ENCODE measurements at regions of chr11 and their contacts with region 1.

Region 1: DNA sequence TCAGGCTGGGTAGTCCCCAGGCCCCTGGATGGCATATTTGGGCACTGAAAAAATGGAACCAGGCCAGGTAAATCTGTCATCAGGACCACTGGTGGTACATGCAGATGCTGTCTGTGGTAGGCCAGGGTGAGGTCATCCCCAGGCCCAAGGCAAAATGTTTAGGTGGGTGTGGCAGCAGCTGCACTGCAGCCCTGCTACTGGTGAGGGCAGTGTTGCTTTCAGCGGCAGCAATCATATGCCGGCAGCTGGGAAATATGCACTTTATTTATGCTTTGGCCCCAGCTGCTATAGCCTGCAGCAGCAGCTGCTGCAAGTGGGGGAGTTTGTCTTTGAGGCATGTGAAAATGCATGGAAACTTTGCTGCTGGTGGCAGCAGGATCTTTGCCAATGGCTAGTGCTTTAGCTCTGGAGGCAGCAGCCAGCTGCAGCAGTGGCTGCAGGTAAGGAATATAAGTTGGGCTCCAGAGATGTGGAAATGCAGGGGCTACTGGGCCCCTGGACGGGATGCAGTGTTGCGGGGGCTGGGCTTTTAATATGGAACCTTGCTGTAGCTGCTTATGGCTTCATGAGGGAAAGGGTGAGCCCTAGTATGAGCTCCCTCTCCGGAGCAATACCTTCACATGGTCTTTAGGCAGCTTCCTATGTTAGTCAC is 365.7 kb upstream of the CADM1 start:
- DNase-seq: peak; percentile 51
- ATAC-seq: peak; percentile 87
- H3K4me3 ChIP-seq: no peak overlapping the region
- H3K27ac ChIP-seq: no peak overlapping the region
- H3K4me1 ChIP-seq: peaks cover 49% of the 10 kb centered on the region
- H3K27me3 ChIP-seq: no peaks in the 10 kb centered on the region
- CTCF ChIP-seq: peak; percentile 80 to 90 (median 85)
- EP300 ChIP-seq: peak in 1 of 2 experiments; percentile 24; a peak in 1 of 4 replicates
- POLR2A ChIP-seq: no peak
- RAD21 ChIP-seq: peak; percentile 77

Region 2: GRCh38 chr11:115912484-115912945 is 42.6 kb after region 1 on chr11:
- CTCF ChIA-PET with region 1: interaction called, 64 read pairs
- POLR2A ChIA-PET with region 1: interaction called, 122 read pairs
- RAD21 ChIA-PET with region 1: interaction called, 123 read pairs
- SMC1A ChIA-PET with region 1: interaction called, 325 read pairs
- in situ Hi-C with region 1: no loop called
- intact Hi-C with region 1: loop called (anchors 2 kb)
- DNase-seq: no peak
- ATAC-seq: peak; percentile 90
- H3K4me3 ChIP-seq: no peak overlapping the region; the same call in 1 of the 2 replicates
- H3K27ac ChIP-seq: peak overlapping the region; percentile 56
- H3K4me1 ChIP-seq: peaks cover 24% of the 10 kb centered on the region
- H3K27me3 ChIP-seq: no peaks in the 10 kb centered on the region
- CTCF ChIP-seq: peak; percentile 42 to 67 (median 48); a peak in 5 of 6 replicates
- EP300 ChIP-seq: no peak
- POLR2A ChIP-seq: no peak
- RAD21 ChIP-seq: peak; percentile 85

Region 3: GRCh38 chr11:115924744-115925567 is 55.0 kb after region 1 on chr11:
- CTCF ChIA-PET with region 1: interaction called, 48 read pairs
- POLR2A ChIA-PET with region 1: interaction called, 122 read pairs
- RAD21 ChIA-PET with region 1: interaction called, 198 read pairs
- SMC1A ChIA-PET with region 1: interaction called, 325 read pairs
- in situ Hi-C with region 1: no loop called
- intact Hi-C with region 1: loop called (anchors 2 kb)
- DNase-seq: peak; percentile 99
- ATAC-seq: peak; percentile 62
- H3K4me3 ChIP-seq: no peak overlapping the region
- H3K27ac ChIP-seq: peak overlapping the region; percentile 95
- H3K4me1 ChIP-seq: peaks cover 97% of the 10 kb centered on the region
- H3K27me3 ChIP-seq: no peaks in the 10 kb centered on the region
- CTCF ChIP-seq: 0 out of 6 replicates have a peak, but pooled peaks of 1 of the 3 experiments have one; percentile 0
- EP300 ChIP-seq: peak; percentile 94 to 95
- POLR2A ChIP-seq: peak; percentile 57; the same call in 1 of the 2 replicates
- RAD21 ChIP-seq: peak; percentile 32

Region 4: GRCh38 chr11:115990004-115990447 is 120.1 kb after region 1 on chr11:
- CTCF ChIA-PET with region 1: interaction called, 15 read pairs
- POLR2A ChIA-PET with region 1: no interaction called
- RAD21 ChIA-PET with region 1: interaction called, 7 read pairs
- SMC1A ChIA-PET with region 1: interaction called, 21 read pairs
- in situ Hi-C with region 1: no loop called
- intact Hi-C with region 1: loop called (anchors 5 kb)
- DNase-seq: no peak
- ATAC-seq: peak; percentile 91
- H3K4me3 ChIP-seq: no peak overlapping the region
- H3K27ac ChIP-seq: no peak overlapping the region
- H3K4me1 ChIP-seq: no peaks in the 10 kb centered on the region
- H3K27me3 ChIP-seq: no peaks in the 10 kb centered on the region
- CTCF ChIP-seq: peak; percentile 60 to 81 (median 62); a peak in 5 of 6 replicates
- EP300 ChIP-seq: no peak
- POLR2A ChIP-seq: no peak
- RAD21 ChIP-seq: peak; percentile 56

Region 5: DNA sequence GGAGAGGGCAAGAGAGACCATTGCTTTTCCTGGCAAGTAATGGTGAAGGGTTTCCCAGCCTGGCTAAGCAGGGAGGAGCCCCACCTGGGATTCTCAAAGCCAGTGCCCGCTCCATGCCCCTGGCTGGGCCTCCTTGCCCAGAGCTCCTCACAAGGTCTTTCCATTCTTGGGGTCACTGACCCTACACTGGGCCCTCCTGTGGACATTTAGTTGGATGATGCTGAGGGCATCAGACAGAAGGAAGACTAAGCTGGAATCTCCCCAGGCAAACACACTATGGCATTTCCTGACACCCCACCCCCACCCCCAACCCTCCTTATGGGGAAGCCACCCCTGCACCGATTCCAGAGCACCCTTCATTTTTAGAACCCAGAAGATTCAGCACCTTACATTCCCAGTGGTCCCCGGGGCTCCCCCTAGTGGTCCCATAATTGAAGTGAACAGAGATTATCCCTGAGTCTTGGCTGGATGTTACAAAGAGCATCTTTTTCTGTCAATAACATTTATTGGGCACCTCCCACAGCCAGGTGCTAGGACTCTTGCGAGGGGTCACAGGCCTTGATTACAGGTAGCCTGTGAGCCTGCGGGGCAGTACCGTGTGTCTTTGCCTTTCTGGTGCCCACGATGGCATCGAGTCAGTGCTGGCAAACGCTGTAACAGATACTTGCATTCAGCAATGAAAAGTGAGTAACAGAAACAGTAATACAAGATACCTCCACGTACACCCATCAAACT is 354.4 kb after region 1 on chr11:
- CTCF ChIA-PET with region 1: no interaction called
- POLR2A ChIA-PET with region 1: no interaction called
- RAD21 ChIA-PET with region 1: no interaction called
- SMC1A ChIA-PET with region 1: interaction called, 3 read pairs
- in situ Hi-C with region 1: no loop called
- intact Hi-C with region 1: loop called (anchors 5 kb)
- DNase-seq: no peak
- ATAC-seq: peak; percentile 92
- H3K4me3 ChIP-seq: no peak overlapping the region
- H3K27ac ChIP-seq: no peak overlapping the region
- H3K4me1 ChIP-seq: no peaks in the 10 kb centered on the region
- H3K27me3 ChIP-seq: no peaks in the 10 kb centered on the region
- CTCF ChIP-seq: peak; percentile 70 to 78 (median 76)
- EP300 ChIP-seq: no peak
- POLR2A ChIP-seq: no peak
- RAD21 ChIP-seq: peak; percentile 81

Measured in GM12878 (cell line).